Naive thymus-derived CD4-positive, alpha-beta T cell (primary cell): ENCODE measurements at regions of chr5 and their contacts with region 1.

Region 1: DNA sequence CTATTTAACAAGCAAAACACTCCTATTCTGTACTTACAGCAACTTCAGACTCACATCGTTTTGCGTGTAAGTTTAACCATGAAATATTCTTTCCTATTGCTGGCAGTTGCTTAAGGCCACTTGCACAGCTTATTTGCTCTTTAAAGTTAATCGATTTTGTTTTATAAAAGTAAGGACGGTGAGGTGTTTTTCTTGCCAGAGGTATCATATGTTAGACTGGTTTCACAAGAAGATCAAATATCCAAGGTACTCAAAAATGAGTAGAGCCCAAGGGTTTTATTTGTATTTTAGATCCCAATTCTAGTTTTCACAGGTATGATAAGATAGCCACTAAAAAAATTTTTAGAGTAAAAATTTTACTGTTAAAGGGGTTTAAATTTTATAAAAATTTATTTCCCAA is 16.2 kb downstream of the CLINT1 start:
- DNase-seq: no peak
- ATAC-seq: no peak
- H3K4me3 ChIP-seq: no peak overlapping the region
- H3K4me3 Mint-ChIP-seq: no peak overlapping the region
- H3K27ac ChIP-seq: no peak overlapping the region
- H3K27ac Mint-ChIP-seq: peak overlapping the region in 1 of 9 donors; percentile 59
- H3K4me1 ChIP-seq: peaks cover 0 to 8% of the 10 kb centered on the region in 2 donors
- H3K4me1 Mint-ChIP-seq: peaks cover 9 to 45% (median 34%) of the 10 kb centered on the region in 7 donors
- H3K27me3 ChIP-seq: no peaks in the 10 kb centered on the region
- H3K27me3 Mint-ChIP-seq: no peaks in the 10 kb centered on the region

Region 2: GRCh38 chr5:157602505-157602904 is 240.3 kb before region 1 on chr5:
- CTCF ChIA-PET with region 1: no interaction called
- POLR2A ChIA-PET with region 1: no interaction called
- intact Hi-C with region 1: no loop called
- DNase-seq: peak in 1 of 9 donors; percentile 50
- ATAC-seq: peak; percentile 51
- H3K4me3 ChIP-seq: no peak overlapping the region
- H3K4me3 Mint-ChIP-seq: peak overlapping the region in 5 of 10 donors; percentile 7 to 70 (median 18)
- H3K27ac ChIP-seq: no peak overlapping the region
- H3K27ac Mint-ChIP-seq: peak overlapping the region in 6 of 9 donors; percentile 13 to 85 (median 52)
- H3K4me1 ChIP-seq: peaks cover 21 to 28% of the 10 kb centered on the region in 2 donors
- H3K4me1 Mint-ChIP-seq: peaks cover 24 to 79% (median 34%) of the 10 kb centered on the region in 7 donors
- H3K27me3 ChIP-seq: no peaks in the 10 kb centered on the region
- H3K27me3 Mint-ChIP-seq: no peaks in the 10 kb centered on the region

Region 3: GRCh38 chr5:157828944-157829632 is 13.7 kb before region 1 on chr5:
- CTCF ChIA-PET with region 1: interaction called, 3 read pairs
- POLR2A ChIA-PET with region 1: no interaction called
- intact Hi-C with region 1: loop called in 1 of 2 experiments (anchors 2 kb)
- DNase-seq: no peak
- ATAC-seq: peak; percentile 56
- H3K4me3 ChIP-seq: no peak overlapping the region
- H3K4me3 Mint-ChIP-seq: peak overlapping the region in 2 of 10 donors; percentile 43 to 56
- H3K27ac ChIP-seq: no peak overlapping the region
- H3K27ac Mint-ChIP-seq: peak overlapping the region in 3 of 9 donors; percentile 71 to 75 (median 72)
- H3K4me1 ChIP-seq: peaks cover 0 to 5% of the 10 kb centered on the region in 2 donors
- H3K4me1 Mint-ChIP-seq: peaks cover 18 to 85% (median 66%) of the 10 kb centered on the region in 7 donors
- H3K27me3 ChIP-seq: no peaks in the 10 kb centered on the region
- H3K27me3 Mint-ChIP-seq: no peaks in the 10 kb centered on the region